ENCODE measurements at regions of chr3 and their contacts with region 1.

Region 1: DNA sequence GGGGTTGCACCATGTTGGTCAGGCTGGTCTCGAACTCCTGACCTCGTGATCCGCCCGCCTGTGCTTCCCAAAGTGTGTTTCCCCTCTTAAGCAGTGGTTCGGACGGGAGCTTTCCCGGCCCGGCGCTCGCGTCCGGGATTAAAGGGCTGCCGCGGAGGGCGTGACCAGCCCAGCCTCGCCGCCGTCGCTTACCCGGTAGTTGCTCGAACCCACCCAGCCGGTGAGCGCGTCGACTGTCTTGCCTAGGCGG is 513 bp downstream of the CLASP2 start:
- DNase-seq: peak in 12 of 35 experiments; percentile 16 to 58 (median 40)
- ATAC-seq: peak; percentile 46 to 67 (median 58)
- H3K4me3 ChIP-seq: peak overlapping the region; percentile 93 to 94
- H3K4me3 Mint-ChIP-seq: peak overlapping the region in 2 of 3 donors; percentile 97 to 98
- H3K27ac ChIP-seq: peak overlapping the region; percentile 94
- H3K27ac Mint-ChIP-seq: peak overlapping the region; percentile 53 to 87
- H3K4me1 ChIP-seq: peaks cover 13 to 14% of the 10 kb centered on the region in 2 experiments
- H3K4me1 Mint-ChIP-seq: peaks cover 0 to 13% (median 12%) of the 10 kb centered on the region in 3 donors
- H3K27me3 ChIP-seq: no peaks in the 10 kb centered on the region
- H3K27me3 Mint-ChIP-seq: no peaks in the 10 kb centered on the region

Region 2: GRCh38 chr3:32719335-32719734 is 998.2 kb before region 1 on chr3:
- CTCF ChIA-PET with region 1: no interaction called
- POLR2A ChIA-PET with region 1: no interaction called
- DNase-seq: no peak
- ATAC-seq: no peak
- H3K4me3 ChIP-seq: no peak overlapping the region
- H3K4me3 Mint-ChIP-seq: no peak overlapping the region
- H3K27ac ChIP-seq: no peak overlapping the region
- H3K27ac Mint-ChIP-seq: no peak overlapping the region
- H3K4me1 ChIP-seq: no peaks in the 10 kb centered on the region
- H3K4me1 Mint-ChIP-seq: no peaks in the 10 kb centered on the region
- H3K27me3 ChIP-seq: no peaks in the 10 kb centered on the region
- H3K27me3 Mint-ChIP-seq: no peaks in the 10 kb centered on the region

Region 3: GRCh38 chr3:33597257-33597689 is 120.3 kb before region 1 on chr3:
- CTCF ChIA-PET with region 1: no interaction called
- POLR2A ChIA-PET with region 1: no interaction called
- DNase-seq: no peak
- ATAC-seq: no peak
- H3K4me3 ChIP-seq: no peak overlapping the region
- H3K4me3 Mint-ChIP-seq: no peak overlapping the region
- H3K27ac ChIP-seq: no peak overlapping the region
- H3K27ac Mint-ChIP-seq: no peak overlapping the region
- H3K4me1 ChIP-seq: no peaks in the 10 kb centered on the region
- H3K4me1 Mint-ChIP-seq: no peaks in the 10 kb centered on the region
- H3K27me3 ChIP-seq: no peaks in the 10 kb centered on the region
- H3K27me3 Mint-ChIP-seq: no peaks in the 10 kb centered on the region

Region 4: GRCh38 chr3:33699275-33699674 is 18.3 kb before region 1 on chr3:
- CTCF ChIA-PET with region 1: interaction called in 1 of 2 experiments, 11 read pairs
- POLR2A ChIA-PET with region 1: interaction called in 1 of 2 experiments, 3 read pairs
- DNase-seq: no peak
- ATAC-seq: no peak
- H3K4me3 ChIP-seq: no peak overlapping the region
- H3K4me3 Mint-ChIP-seq: no peak overlapping the region
- H3K27ac ChIP-seq: no peak overlapping the region
- H3K27ac Mint-ChIP-seq: no peak overlapping the region
- H3K4me1 ChIP-seq: peaks cover 0 to 2% of the 10 kb centered on the region in 2 experiments
- H3K4me1 Mint-ChIP-seq: peaks cover 43 to 46% (median 44%) of the 10 kb centered on the region in 3 donors
- H3K27me3 ChIP-seq: no peaks in the 10 kb centered on the region
- H3K27me3 Mint-ChIP-seq: no peaks in the 10 kb centered on the region

Region 5: DNA sequence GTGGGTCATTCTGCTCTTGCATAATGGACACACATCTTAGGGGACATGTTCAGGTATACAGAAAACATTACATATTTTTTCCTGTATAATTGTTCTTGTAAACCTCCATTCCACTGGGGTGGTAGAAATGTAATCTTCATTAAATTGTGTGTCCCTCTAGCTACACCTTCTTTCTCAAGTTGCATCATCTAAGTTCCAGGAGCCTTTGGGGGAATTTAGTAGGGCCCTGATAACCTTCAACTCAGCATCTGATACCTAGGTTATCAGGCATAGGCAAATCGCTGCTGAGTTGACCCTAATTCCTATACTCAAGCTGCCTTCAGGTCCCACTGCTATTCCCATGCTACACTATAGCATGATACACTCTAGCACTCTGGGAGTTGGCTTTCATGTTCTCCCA is 19.6 kb after region 1 on chr3:
- CTCF ChIA-PET with region 1: no interaction called
- POLR2A ChIA-PET with region 1: no interaction called
- DNase-seq: no peak
- ATAC-seq: no peak
- H3K4me3 ChIP-seq: no peak overlapping the region
- H3K4me3 Mint-ChIP-seq: no peak overlapping the region
- H3K27ac ChIP-seq: no peak overlapping the region
- H3K27ac Mint-ChIP-seq: no peak overlapping the region
- H3K4me1 ChIP-seq: no peaks in the 10 kb centered on the region
- H3K4me1 Mint-ChIP-seq: no peaks in the 10 kb centered on the region
- H3K27me3 ChIP-seq: peaks cover 0 to 3% of the 10 kb centered on the region in 2 experiments
- H3K27me3 Mint-ChIP-seq: peaks cover 2 to 13% of the 10 kb centered on the region in 2 donors

Region 6: DNA sequence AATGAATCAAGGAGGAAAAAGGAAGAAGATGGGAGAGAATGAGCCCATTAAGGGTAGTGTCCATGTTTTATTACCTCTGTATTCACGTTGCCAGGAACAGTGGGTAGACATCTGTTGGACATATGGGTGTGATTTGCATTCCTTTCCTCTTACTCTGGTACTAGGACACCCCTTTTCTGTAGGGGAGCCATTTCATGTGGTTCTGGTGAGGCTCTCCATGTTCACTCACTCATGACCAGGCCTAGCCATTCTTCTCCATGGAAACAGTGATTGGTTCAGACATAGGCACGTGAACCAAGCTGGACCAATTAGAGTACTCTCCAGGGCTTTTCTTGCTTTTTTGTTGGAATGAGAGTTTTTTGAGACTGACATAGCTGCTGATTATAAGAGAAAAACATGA is 41.3 kb after region 1 on chr3:
- CTCF ChIA-PET with region 1: no interaction called
- POLR2A ChIA-PET with region 1: interaction called in 1 of 2 experiments, 13 read pairs
- DNase-seq: no peak
- ATAC-seq: no peak
- H3K4me3 ChIP-seq: no peak overlapping the region
- H3K4me3 Mint-ChIP-seq: no peak overlapping the region
- H3K27ac ChIP-seq: no peak overlapping the region
- H3K27ac Mint-ChIP-seq: no peak overlapping the region
- H3K4me1 ChIP-seq: no peaks in the 10 kb centered on the region
- H3K4me1 Mint-ChIP-seq: no peaks in the 10 kb centered on the region
- H3K27me3 ChIP-seq: peaks cover 0 to under 1% of the 10 kb centered on the region in 2 experiments
- H3K27me3 Mint-ChIP-seq: peaks cover 0 to 14% of the 10 kb centered on the region in 2 donors

Region 7: DNA sequence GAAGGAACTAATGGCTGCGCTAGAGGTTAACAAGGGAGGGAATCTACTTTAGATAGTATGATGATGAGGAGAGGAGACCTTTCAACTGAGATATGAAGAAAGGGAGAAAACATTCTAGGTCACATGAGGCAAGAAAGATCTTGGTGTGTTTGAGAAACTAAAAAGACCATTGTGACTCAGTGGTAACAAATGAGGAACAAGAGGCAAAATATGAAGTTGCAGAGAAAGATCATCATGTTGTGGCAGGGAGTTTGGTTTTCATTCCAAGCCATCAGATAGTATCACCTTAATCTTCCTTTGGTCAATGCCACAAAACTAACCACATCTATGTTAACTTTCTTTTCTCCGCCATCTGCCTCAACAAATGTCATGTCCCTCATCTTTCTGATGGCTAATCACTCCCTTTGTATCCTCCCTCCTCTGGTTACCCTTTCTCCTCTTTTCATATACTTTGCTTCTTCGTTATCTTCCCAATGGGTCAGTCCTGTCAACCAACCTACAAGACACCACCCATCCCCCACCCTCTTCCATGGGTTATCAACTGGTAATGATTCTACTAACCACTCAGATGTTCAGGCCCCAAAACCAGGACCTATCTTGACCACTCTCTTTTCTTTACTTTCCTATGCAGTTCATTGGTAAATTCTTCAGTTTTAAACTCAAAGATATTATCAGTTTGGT is 78.5 kb after region 1 on chr3:
- CTCF ChIA-PET with region 1: no interaction called
- POLR2A ChIA-PET with region 1: no interaction called
- DNase-seq: no peak
- ATAC-seq: no peak
- H3K4me3 ChIP-seq: no peak overlapping the region
- H3K4me3 Mint-ChIP-seq: no peak overlapping the region
- H3K27ac ChIP-seq: no peak overlapping the region
- H3K27ac Mint-ChIP-seq: no peak overlapping the region
- H3K4me1 ChIP-seq: peaks cover 17 to 24% of the 10 kb centered on the region in 2 experiments
- H3K4me1 Mint-ChIP-seq: peaks cover 30 to 43% (median 38%) of the 10 kb centered on the region in 3 donors
- H3K27me3 ChIP-seq: no peaks in the 10 kb centered on the region
- H3K27me3 Mint-ChIP-seq: peaks cover 0 to 1% of the 10 kb centered on the region in 2 donors

Measured in T-cell (primary cell).